Activated CD8-positive, alpha-beta T cell treated with anti-CD3 and anti-CD28 coated beads for 36 hours (primary cell): ENCODE measurements at regions of chr18 and their contacts with region 1.

Region 1: GRCh38 chr18:3447895-3448837 is 1.8 kb upstream of the TGIF1 start:
- DNase-seq: peak; percentile 92
- ATAC-seq: peak; percentile 69
- H3K4me3 Mint-ChIP-seq: peak overlapping the region; percentile 94
- H3K27ac Mint-ChIP-seq: peak overlapping the region; percentile 92
- H3K4me1 Mint-ChIP-seq: peaks cover 19% of the 10 kb centered on the region
- H3K27me3 Mint-ChIP-seq: no peaks in the 10 kb centered on the region
- CTCF ChIP-seq: no peak

Region 2: GRCh38 chr18:3281456-3282400 is 166.4 kb before region 1 on chr18:
- CTCF ChIA-PET with region 1: interaction called, 4 read pairs
- POLR2A ChIA-PET with region 1: no interaction called
- intact Hi-C with region 1: loop called (anchors 5 kb)
- DNase-seq: no peak
- ATAC-seq: peak; percentile 88
- H3K4me3 Mint-ChIP-seq: no peak overlapping the region
- H3K27ac Mint-ChIP-seq: no peak overlapping the region
- H3K4me1 Mint-ChIP-seq: peaks cover 9% of the 10 kb centered on the region
- H3K27me3 Mint-ChIP-seq: no peaks in the 10 kb centered on the region
- CTCF ChIP-seq: peak; percentile 76

Region 3: DNA sequence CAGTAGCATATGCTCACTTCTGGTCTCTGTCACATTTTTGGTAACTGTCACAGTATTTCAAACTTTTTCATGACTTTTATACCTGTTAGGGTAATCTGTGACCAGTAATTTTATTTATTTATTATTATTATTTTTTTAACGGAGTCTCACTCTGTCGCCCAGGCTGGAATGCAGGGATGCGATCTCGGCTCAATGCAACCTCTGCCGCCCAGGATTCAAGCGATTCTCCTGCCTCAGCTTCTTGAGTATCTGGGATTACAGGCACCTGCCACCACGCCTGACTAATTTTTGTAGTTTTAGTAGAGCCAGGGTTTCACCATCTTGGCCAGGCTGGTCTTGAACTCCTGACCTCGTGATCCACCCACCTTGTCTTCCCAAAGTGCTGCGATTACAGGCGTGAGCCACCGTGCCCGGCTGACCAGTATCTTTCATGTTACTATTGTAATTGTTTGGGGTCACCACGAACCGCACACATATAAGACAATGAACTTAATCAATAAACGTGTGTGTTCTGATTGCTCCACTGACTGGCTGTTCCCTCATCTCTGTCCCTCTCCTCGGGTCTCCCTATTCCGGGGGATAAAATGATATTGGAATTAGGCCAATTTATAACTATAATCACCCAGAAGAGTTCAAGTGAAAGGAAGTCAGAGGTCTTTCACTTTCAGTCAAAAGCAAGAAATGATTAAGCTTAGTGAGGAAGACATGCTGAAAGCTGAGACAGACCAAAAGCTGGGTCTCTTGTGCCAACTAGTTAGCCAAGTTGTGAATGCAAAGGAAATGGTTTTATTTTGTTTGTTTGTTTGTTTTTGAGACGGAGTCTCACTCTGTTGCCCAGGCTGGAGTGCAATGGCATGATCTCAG is 24.7 kb after region 1 on chr18:
- CTCF ChIA-PET with region 1: interaction called, 27 read pairs
- POLR2A ChIA-PET with region 1: interaction called, 3 read pairs
- intact Hi-C with region 1: no loop called
- DNase-seq: peak; percentile 21
- ATAC-seq: peak; percentile 89
- H3K4me3 Mint-ChIP-seq: no peak overlapping the region
- H3K27ac Mint-ChIP-seq: peak overlapping the region; percentile 5
- H3K4me1 Mint-ChIP-seq: peaks cover 8% of the 10 kb centered on the region
- H3K27me3 Mint-ChIP-seq: peaks cover 1% of the 10 kb centered on the region
- CTCF ChIP-seq: no peak

Region 4: DNA sequence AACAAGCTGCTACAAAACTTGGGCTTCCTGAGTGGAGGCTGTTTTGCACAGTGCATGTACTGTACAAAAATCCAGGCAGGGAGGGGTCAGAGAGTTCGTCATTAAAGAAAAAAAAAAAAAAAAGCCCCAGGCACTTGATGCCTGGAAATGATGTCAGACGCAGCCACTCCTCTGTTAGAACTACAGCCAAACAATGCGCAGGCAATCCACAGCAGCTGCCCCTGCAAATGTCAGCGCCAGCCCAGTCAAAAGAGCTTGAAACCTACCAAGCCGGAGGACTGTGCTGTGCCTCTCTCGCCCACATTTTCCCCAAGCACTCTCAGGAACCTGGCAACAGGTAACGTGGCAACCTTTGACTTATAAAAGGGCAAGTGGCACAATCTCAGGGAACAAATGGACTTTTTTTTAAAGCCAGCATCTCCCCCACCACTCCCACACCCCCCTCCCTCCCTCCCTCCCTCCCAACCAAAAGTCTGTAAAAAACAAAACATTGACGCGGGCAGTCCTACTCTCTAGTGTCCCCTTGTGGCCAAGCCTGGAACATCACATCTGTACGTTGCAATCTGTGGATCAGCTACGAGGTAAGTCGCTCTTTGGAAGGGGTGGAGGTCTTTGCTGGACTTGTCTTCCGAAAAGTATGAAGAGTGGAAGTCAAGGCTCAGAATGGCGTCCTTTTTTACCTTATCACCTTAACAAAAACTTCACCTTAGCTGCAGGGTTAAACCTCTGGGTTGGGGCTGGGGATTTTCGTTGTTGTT is 145.9 kb after region 1 on chr18:
- CTCF ChIA-PET with region 1: interaction called, 50 read pairs
- POLR2A ChIA-PET with region 1: interaction called, 33 read pairs
- intact Hi-C with region 1: loop called (anchors 2 kb)
- DNase-seq: peak; percentile 95
- ATAC-seq: peak; percentile 85
- H3K4me3 Mint-ChIP-seq: peak overlapping the region; percentile 82
- H3K27ac Mint-ChIP-seq: peak overlapping the region; percentile 95
- H3K4me1 Mint-ChIP-seq: peaks cover 50% of the 10 kb centered on the region
- H3K27me3 Mint-ChIP-seq: no peaks in the 10 kb centered on the region
- CTCF ChIP-seq: peak; percentile 81